Right ventricle myocardium superior (tissue), 1 donor: ENCODE measurements at regions of chr22 and their contacts with region 1.

Region 1: DNA sequence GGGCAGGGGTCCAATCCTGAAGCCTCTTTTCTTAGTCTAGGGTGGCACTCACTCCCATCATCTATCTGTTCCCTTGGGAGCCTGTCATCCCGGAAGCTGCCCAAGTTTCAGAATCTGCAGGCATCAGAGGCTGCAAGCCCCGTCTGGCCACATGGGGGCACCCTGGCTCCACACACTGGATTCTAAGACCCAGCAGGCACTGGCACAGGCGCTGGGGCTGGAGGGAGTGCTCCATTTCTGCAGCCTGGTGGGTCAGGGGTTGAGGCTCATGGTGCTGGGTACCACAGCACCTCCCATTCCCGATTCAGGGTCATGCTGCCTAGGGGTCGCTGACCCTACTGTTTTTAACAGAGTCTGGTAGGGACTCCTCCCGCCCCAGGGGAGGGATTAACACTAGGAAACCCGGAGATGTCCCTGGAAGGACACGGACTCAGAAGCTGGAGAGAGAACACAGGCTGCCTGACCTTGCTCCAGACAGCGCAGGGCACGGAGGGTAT is 243.9 kb upstream of the SYN3 start:
- DNase-seq: peak; percentile 89
- ATAC-seq: peak; percentile 90

Region 2: DNA sequence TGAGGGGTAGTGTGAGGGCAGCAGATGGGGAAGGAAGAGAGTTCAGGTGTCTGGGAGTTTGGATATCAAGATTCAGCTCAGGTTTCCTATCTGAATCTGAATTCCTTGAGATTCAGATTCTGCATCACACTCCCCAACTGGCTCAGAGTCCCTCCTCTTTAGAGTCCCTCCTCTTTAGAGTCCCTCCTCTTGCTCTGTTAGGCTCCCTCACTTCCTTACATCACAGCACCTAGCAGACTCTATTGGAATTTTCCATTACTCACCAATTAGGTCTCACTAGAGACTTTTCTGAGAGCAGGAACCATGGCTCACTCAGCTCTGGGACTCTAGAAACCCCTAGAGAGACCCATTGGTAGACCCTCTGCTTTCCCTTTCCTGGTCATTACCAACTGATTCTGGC is 59.5 kb after region 1 on chr22:
- intact Hi-C with region 1: loop called (anchors 10 kb)
- DNase-seq: no peak
- ATAC-seq: no peak

Region 3: DNA sequence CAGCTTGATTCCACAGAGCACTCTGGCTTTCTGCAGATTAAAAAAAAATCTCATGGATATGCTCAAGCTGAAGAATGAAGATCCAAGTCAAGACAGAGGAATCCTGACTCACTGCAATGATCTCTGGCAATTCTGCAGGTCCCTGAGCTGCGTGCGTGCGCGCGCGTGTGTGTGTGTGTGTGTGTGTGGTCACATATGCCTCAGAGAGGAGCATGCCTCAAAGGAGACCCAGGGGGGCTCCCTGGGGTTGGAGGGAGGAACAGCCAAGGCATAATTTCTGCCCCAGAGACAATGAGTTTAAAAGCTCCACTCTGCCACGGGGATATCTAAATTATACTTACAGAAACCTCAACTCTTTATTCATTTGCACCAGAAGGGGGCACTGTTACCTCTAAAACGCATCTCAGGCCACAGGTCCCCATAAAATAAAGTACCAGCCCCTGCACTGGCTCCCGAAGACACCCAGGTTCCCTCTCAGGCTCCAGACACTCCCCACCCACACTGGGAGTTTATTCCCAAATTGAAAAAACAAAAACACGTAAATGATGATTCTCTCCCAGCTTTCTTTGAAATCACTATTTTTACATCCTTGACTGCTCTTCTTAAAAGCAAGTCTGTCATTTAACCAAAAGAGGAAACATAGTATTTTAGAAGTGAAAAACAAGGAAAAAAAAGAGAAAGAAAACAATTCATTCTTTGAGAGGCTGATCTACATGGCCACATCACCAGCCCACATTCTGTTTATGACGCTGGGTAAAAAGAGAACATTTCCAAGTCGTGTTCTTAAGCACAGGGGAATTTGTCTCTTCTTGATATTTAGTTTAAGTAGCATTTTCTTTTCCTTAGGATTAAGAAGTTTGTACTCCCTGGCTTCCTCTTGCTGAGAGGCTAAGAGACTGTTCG is 217.2 kb after region 1 on chr22:
- intact Hi-C with region 1: loop called (anchors 10 kb)
- DNase-seq: no peak
- ATAC-seq: peak; percentile 73

Region 4: DNA sequence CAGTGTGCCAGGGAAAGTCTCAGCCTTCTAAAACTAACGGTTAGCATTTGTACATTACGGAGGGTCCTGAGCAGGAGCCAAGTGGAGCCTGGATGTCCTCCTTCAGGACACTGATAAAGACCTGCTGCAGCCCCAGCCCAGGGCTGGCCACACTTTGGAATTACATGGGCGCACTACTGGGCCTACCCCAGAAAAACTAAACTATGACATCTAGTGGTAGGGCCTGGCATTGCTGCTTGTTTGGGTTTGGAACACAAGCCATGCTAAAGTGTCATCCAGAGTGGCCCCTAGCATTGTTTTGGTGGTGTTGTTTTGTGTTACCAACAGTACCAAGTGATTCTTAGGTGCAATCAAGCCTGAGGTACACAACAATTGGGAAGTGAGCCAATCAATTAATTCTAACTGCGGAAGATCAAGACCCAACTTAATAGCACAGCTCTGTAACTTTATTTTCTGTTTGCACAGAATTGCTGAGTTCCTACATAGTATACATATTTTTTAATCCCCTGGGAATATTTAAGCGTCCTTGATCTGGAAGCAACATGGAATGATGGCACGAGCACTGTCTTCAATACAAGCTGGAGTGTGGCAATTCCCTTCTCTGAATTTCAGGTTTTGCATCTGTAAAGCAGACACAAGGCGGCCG is 277.5 kb after region 1 on chr22:
- intact Hi-C with region 1: loop called (anchors 5 kb)
- DNase-seq: peak; percentile 72
- ATAC-seq: peak; percentile 90

Region 5: DNA sequence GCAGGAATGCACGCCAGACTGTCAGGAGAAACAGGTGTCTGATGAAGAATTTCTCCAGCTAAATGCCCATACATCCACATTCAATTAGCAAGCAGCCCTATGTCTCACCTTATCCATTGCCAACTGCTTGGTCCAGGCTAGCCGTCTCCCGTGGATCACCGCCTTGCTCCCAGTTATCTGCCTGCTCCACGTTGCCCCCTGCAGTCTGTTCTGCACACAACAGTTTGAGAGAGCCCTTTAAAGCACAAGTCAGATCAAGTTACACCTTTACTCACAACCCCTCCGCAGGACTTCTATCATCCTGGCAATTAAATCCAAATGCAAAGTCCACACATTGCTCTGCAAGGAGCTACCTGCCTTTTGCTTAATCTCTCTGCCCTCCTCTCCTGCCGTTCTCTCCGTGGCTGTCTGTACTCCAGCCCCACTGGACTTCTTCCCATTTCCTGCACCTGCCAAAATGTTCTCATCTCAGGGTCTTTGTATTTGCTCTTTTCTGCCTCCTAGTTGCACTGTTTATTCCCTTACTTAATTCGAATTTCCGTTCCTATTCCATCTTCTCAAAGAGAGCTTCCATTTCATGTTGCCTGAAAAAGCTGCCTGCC is 803.5 kb after region 1 on chr22:
- intact Hi-C with region 1: loop called (anchors 5 kb)
- DNase-seq: peak; percentile 68
- ATAC-seq: peak; percentile 87